OCI-LY7 (cell line): ENCODE measurements at regions of chr21 and their contacts with region 1.

Region 1: GRCh38 chr21:42711667-42712066 is 58.2 kb downstream of the PDE9A start:
- DNase-seq: no peak
- H3K4me3 ChIP-seq: no peak overlapping the region
- H3K27ac ChIP-seq: no peak overlapping the region
- H3K4me1 ChIP-seq: no peaks in the 10 kb centered on the region
- CTCF ChIP-seq: no peak

Region 2: DNA sequence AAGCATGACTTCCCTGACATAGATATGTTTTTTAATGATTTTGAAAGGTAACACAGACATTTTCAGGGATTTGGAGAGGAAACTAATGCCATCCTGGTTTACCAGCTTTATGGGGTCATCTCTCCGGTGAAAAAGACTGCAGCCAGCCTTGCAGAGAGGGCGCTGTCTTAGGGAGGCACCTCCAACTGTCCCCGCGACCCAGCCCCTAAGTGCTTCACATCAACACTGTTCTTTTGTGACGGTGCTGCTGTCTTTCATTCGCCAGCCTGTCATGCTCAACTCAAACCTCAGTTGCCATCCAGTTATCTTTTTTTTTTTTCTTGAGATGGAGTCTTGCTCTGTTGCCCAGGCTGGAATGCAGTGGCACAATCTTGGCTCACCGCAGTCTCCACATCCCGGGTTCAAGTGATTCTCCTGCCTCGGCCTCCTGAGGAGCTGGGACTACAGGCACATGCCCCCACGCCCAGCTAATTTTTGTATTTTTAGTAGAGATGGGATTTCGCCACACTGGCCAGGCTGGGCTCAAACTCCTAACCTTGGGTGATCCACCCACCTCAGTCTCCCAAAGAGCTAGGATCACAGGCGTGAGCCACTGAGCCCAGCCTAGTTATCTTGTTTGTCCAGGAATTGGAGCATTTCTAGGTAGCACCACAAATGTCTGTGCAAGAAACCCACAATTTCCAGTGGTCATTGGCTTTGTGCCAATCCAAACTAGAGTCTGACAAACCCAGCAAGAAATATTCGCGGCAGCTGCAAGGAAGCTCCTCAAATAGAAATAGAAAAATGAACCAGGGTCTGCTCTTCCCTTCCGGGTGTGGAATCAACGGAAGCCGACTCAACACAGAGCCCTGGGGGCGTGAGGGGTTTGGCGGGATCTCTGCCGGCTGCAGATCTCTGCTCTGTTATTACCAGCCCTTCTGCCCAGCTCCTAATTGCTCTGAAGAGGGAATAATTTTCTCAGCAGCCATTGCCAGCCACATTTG is 34.0 kb before region 1 on chr21:
- CTCF ChIA-PET with region 1: no interaction called
- POLR2A ChIA-PET with region 1: no interaction called
- intact Hi-C with region 1: no loop called
- DNase-seq: peak; percentile 31
- H3K4me3 ChIP-seq: no peak overlapping the region
- H3K27ac ChIP-seq: no peak overlapping the region
- H3K4me1 ChIP-seq: peaks cover 15% of the 10 kb centered on the region
- CTCF ChIP-seq: no peak

Region 3: DNA sequence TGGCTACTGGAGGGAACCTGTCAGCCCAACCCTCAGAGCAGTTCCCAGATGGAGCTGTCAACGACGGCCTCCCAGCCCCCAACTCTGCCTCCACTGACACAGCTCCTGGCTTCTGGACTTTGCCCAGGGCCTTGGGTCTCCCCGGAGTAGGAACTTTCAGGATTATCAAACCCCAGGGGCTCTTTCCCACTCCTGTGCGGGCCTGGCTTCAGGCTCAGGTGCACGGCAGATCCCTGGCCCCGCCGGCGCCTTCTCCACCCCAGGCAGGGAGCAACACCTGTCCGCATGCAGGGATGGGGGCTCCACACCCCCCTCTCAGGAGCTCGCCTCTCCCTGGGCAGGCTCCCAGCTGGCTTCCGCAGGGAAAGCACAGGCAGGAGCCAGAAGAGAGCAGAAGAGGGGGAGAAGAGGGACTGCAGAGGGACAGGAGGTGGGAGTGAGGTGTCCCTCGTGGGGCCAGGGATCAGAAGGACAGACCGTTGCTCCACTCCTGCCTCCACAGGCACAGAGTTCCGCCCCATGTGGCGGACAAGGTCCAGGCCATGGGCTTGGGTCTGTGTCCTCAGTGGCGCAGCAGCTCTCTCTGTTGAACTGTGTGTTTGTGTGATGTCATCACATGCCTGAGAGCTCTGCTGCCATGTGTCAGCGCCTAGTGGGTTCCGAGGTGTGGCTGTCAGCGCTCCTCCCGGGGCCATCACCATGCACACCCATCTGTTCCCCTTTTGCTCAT is 49.4 kb after region 1 on chr21:
- CTCF ChIA-PET with region 1: no interaction called
- POLR2A ChIA-PET with region 1: no interaction called
- intact Hi-C with region 1: no loop called
- DNase-seq: no peak
- H3K4me3 ChIP-seq: no peak overlapping the region
- H3K27ac ChIP-seq: no peak overlapping the region
- H3K4me1 ChIP-seq: no peaks in the 10 kb centered on the region
- CTCF ChIP-seq: no peak

Region 4: DNA sequence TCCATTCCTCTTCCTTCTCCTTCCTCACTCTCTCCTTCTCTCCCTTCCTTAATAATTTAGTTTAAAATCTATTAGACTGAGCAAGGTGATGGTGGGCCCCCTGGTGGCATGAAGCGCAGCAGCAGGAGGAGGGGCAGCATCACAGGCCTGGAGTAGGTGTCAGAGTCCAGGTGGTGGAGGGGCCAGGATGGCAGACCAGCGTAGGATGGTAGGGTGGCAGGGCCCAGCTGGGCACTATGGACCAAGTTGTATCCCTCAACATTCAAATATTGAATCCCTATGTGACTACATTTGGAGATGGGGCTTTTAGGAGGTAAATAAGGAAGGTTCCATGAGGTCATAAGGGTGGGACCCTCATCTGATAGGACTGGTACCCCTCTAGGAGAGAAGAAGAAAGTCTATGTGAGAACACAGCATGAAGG is 106.7 kb after region 1 on chr21:
- CTCF ChIA-PET with region 1: no interaction called
- POLR2A ChIA-PET with region 1: no interaction called
- intact Hi-C with region 1: loop called (anchors 10 kb)
- DNase-seq: peak; percentile 41
- H3K4me3 ChIP-seq: no peak overlapping the region
- H3K27ac ChIP-seq: no peak overlapping the region
- H3K4me1 ChIP-seq: no peaks in the 10 kb centered on the region
- CTCF ChIP-seq: peak; percentile 89